CD8-positive, alpha-beta memory T cell (primary cell): ENCODE measurements at regions of chr3 and their contacts with region 1.

Region 1: DNA sequence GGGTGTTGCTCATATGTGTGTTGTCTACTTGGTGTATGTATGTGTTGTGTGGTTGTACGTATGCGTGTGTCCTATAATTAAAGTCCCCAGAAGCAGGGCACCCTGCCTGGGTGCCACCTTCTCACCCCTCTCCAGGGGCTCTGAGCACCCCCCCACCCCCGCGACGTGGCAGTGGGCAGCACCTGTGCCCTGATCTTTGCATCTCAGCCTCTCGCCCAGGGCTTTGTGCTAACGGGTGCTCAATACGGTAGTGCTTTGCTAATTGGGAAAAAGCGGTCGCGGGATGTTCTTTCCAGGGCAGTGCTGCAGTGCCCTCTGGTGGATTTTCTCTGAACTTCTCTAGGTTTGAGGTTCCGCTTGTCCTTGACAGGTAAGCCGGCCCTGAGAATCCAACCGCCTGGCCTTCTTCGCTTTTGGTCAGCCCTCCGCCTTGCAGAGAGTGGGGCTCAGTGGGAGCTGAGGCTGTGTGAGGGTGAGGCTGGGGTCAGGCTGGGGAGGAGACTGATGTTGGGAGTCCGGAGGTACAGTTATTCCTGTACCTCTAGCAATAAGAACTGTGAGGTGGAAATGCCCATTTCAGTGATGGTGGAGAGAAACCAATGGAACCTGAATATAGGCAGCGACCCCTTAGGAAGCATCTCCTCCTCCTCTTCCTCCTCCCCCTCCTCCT is 17.6 kb upstream of the EPHB3 start:
- DNase-seq: peak; percentile 38 to 78 (median 61)
- H3K4me3 ChIP-seq: no peak overlapping the region
- H3K4me3 Mint-ChIP-seq: peak overlapping the region in 3 of 7 donors; percentile 13 to 32 (median 23)
- H3K27ac ChIP-seq: no peak overlapping the region
- H3K27ac Mint-ChIP-seq: peak overlapping the region in 3 of 8 donors; percentile 14 to 93 (median 47)
- H3K4me1 ChIP-seq: peaks cover 9% of the 10 kb centered on the region
- H3K4me1 Mint-ChIP-seq: peaks cover 8 to 12% (median 8%) of the 10 kb centered on the region in 3 donors
- H3K27me3 ChIP-seq: peaks cover 4% of the 10 kb centered on the region
- H3K27me3 Mint-ChIP-seq: peaks cover 17 to 54% of the 10 kb centered on the region in 2 donors

Region 2: DNA sequence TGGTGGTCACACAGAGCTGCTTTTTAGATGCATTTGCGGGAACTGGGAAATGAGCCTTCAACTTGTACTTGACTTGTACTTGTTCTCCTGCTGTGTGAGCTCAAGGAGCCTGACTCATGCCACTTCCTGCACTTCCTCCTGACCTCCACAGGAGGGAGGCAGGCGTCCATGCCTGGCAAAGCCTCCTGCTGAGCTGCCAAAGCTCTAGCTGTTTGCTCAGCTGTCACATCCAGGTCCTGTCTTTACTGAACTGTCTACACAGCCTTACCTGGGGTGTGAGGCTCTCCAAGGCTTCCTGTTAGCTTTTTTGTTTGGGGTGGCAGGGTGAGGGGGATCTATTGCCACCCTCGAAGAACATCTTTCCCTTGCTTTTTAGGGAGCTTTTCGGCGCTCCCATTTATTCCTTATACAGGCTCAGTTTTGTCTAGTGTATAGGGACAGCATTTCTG is 172.4 kb before region 1 on chr3:
- CTCF ChIA-PET with region 1: interaction called, 19 read pairs
- POLR2A ChIA-PET with region 1: no interaction called
- DNase-seq: peak; percentile 18 to 72 (median 39)
- H3K4me3 ChIP-seq: no peak overlapping the region
- H3K4me3 Mint-ChIP-seq: peak overlapping the region in 1 of 7 donors; percentile 14
- H3K27ac ChIP-seq: no peak overlapping the region
- H3K27ac Mint-ChIP-seq: peak overlapping the region in 2 of 8 donors; percentile 1 to 43
- H3K4me1 ChIP-seq: no peaks in the 10 kb centered on the region
- H3K4me1 Mint-ChIP-seq: peaks cover 3 to 10% (median 7%) of the 10 kb centered on the region in 3 donors
- H3K27me3 ChIP-seq: no peaks in the 10 kb centered on the region
- H3K27me3 Mint-ChIP-seq: peaks cover 7 to 17% of the 10 kb centered on the region in 2 donors